ENCODE measurements at regions of chr1 and their contacts with region 1.

Region 1: GRCh38 chr1:171061425-171062143 is 29.1 kb upstream of the FMO3 start:
- DNase-seq: no peak
- ATAC-seq: no peak
- H3K4me3 ChIP-seq: no peak overlapping the region
- H3K27ac ChIP-seq: no peak overlapping the region
- H3K4me1 ChIP-seq: no peaks in the 10 kb centered on the region
- H3K27me3 ChIP-seq: no peaks in the 10 kb centered on the region
- CTCF ChIP-seq: no peak

Region 2: DNA sequence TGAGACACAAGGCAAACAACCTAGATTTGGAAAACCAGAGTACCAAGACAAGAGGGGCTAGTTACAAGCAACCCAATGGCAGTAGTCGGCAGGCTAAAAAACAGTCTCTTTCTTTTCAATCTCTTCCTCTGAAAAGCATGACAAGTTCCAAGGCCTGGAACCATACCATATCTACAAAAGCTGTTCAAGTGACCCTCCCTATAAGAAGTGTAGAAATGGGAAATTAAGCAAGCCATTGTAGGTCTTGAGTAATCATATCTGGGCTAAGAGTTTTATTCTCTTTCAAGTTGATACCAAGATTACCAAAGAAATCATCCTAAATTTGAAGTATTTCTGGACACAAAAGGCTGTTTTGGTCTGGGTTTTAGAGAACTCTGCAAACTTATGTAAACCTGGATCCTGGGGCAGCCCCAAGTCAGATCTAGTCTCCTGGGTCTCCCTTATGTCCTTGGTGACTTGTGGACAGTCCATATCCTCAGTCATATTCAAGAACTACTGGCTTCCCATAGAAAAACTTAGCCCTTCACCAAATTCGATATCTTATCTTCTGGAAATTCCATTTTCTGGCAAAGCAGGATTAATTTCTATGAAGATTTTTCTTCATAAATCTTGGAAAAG is 53.8 kb after region 1 on chr1:
- intact Hi-C with region 1: no loop called
- DNase-seq: no peak
- ATAC-seq: no peak
- H3K4me3 ChIP-seq: no peak overlapping the region
- H3K27ac ChIP-seq: no peak overlapping the region
- H3K4me1 ChIP-seq: no peaks in the 10 kb centered on the region
- H3K27me3 ChIP-seq: no peaks in the 10 kb centered on the region
- CTCF ChIP-seq: no peak

Region 3: DNA sequence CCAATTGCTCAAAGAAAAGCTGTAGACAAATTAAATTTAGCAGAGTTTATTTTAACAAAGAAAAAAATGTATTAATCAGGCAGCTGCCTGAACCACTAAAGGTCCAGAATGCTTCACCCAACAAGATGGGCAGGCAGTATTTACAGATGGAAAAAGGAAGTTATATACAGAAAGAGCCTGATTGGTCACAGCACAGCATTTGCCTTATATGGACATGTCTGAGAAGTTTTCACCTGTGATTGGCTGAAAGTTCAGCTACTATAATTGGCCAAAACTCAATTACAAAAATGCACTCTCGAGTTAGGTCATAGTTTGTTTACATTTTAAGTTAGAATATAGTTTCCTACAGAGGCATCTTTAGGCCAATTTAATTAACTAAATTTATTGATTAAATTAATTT is 171.6 kb after region 1 on chr1:
- intact Hi-C with region 1: loop called in 1 of 3 experiments (anchors 10 kb)
- DNase-seq: no peak
- ATAC-seq: no peak
- H3K4me3 ChIP-seq: no peak overlapping the region
- H3K27ac ChIP-seq: no peak overlapping the region
- H3K4me1 ChIP-seq: no peaks in the 10 kb centered on the region
- H3K27me3 ChIP-seq: no peaks in the 10 kb centered on the region
- CTCF ChIP-seq: no peak

Region 4: DNA sequence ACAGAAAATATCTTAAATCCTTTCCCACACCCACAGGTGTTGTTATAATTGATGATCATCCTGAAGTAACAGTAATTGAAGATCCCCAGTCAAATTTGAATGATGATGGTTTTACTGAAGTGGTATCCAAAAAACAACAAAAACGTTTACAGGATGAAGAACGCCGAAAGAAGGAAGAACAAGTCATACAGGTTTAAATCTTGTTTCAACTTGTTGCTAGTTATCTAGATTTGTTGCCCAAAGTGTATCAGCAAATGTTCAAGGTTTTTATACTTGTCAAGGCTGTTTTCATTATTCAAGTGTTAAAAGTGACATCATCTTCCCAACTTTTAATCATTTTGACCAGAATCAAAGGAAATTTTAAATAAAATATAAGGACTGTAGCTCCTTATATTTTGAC is 488.5 kb after region 1 on chr1:
- intact Hi-C with region 1: no loop called
- DNase-seq: no peak
- ATAC-seq: no peak
- H3K4me3 ChIP-seq: no peak overlapping the region
- H3K27ac ChIP-seq: no peak overlapping the region
- H3K4me1 ChIP-seq: no peaks in the 10 kb centered on the region
- H3K27me3 ChIP-seq: no peaks in the 10 kb centered on the region
- CTCF ChIP-seq: no peak